GM18951 (cell line): ENCODE measurements at regions of chr6 and their contacts with region 1.

Region 1: GRCh38 chr6:36027501-36028087 is at the start of gene MAPK14:
- POLR2A ChIP-seq: peak; percentile 93

Region 2: DNA sequence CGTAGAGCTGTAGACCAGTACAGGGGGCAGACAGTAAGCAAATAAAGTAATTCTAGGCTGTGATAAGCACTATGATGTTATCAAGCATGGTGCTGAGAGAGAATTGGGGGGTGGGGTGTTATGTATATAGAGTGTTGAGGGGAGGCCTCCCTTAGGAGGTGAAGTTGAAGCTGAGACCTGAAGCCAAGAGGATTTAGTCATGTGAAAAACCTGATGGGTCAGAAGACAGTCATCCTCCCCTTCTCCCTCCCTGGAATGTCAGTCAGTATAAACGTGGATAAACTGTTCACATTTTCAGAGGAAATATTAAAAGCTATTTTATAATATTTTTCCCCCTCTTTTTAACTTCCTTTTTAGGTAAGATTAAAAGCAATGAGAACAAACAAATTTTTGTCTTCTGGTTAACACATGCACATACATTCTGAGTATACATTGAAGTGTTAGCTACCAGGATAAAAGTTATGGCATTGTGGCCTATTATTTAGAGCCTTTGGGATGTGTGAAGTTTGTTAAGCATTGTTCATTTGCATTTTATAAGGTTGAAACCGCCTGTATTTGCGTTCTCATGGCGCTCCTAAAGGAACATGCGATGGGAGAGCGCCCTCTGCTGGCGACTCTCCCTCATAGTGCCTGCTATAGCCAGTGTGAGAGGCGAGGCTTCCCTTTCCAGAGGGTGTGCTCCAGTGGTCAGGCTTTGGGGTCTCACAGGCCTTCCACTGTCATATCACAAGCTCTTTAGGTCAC is 67.3 kb after region 1 on chr6:
- in situ Hi-C with region 1: loop called (anchors 5 kb)
- POLR2A ChIP-seq: no peak

Region 3: GRCh38 chr6:36350681-36351571 is 323.3 kb after region 1 on chr6:
- in situ Hi-C with region 1: loop called (anchors 10 kb)
- POLR2A ChIP-seq: no peak